HepG2 (cell line): ENCODE measurements at regions of chr6 and their contacts with region 1.

Region 1: DNA sequence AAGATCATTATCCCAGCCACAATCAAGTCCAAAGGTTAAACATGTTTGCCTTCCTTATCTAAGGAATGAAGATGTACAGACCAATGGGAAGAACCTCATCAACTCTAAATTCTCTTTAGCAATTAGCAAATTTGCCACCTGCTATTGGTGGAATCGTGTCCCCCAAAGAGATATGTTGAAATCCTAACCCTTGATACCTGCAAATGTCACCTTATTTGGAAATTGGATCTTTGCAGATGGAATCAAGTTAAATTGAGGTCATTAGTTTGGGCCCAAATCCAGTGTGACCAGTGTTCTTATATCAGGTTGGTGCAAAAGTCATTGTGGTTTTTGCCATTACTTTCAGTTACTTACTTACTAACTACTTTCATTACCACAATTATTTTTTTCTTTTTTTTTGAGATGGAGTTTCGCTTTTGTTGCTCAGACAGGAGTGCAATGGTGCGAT is 31.3 kb downstream of the KLHL31 start:
- DNase-seq: peak; percentile 85
- ATAC-seq: peak; percentile 82
- H3K4me3 ChIP-seq: peak overlapping the region in 2 of 3 experiments; percentile 4 to 6; a peak in 1 of 6 replicates
- H3K27ac ChIP-seq: peak overlapping the region; percentile 59
- H3K4me1 ChIP-seq: peaks cover 44% of the 10 kb centered on the region
- H3K27me3 ChIP-seq: no peaks in the 10 kb centered on the region
- CTCF ChIP-seq: no peak
- EP300 ChIP-seq: peak in 1 of 2 experiments; percentile 73; a peak in 1 of 4 replicates
- POLR2A ChIP-seq: no peak
- RAD21 ChIP-seq: no peak

Region 2: DNA sequence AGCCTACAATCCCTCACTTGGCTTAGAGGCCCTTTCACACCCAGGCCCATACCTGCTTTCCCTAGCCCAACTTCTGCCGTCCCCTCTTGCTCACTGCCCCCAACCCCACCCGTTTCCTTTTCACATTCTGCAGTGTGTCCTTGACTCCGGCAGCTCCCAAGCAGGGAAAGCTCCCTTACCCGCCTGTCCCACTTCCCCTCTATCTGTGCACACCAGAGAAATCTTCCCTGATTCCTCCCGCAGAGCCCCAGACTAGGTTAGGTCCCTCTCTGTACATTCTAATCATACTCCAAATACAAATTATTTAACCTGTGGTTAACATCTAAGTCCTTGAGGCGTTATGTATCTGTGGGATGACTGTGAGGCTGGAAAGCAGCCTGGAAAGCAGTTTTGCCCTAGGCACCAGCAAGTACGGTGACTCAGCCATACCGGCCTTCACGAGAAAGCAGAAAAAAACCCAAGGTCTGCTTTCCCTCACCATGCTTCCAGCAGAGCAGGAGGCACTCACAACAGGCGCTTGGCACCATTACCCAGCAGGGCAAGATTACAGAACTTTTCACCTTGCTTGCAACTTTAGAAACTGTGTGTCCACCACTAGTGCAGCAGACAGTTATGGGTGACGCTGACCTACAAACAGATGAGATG is 307.7 kb before region 1 on chr6:
- CTCF ChIA-PET with region 1: no interaction called
- POLR2A ChIA-PET with region 1: no interaction called
- in situ Hi-C with region 1: no loop called
- intact Hi-C with region 1: no loop called
- DNase-seq: no peak
- ATAC-seq: peak; percentile 27; the same call in 1 of the 3 replicates
- H3K4me3 ChIP-seq: no peak overlapping the region
- H3K27ac ChIP-seq: no peak overlapping the region
- H3K4me1 ChIP-seq: peaks cover 17% of the 10 kb centered on the region
- H3K27me3 ChIP-seq: no peaks in the 10 kb centered on the region
- CTCF ChIP-seq: no peak
- EP300 ChIP-seq: no peak
- POLR2A ChIP-seq: no peak
- RAD21 ChIP-seq: no peak

Region 3: GRCh38 chr6:53615633-53616449 is 18.4 kb before region 1 on chr6:
- CTCF ChIA-PET with region 1: no interaction called
- POLR2A ChIA-PET with region 1: interaction called, 10 read pairs
- in situ Hi-C with region 1: no loop called
- intact Hi-C with region 1: loop called (anchors 2 kb)
- DNase-seq: peak; percentile 100
- ATAC-seq: peak; percentile 95
- H3K4me3 ChIP-seq: peak overlapping the region; percentile 35 to 60 (median 44); a peak in 5 of 6 replicates
- H3K27ac ChIP-seq: peak overlapping the region; percentile 97
- H3K4me1 ChIP-seq: peaks cover 53% of the 10 kb centered on the region
- H3K27me3 ChIP-seq: no peaks in the 10 kb centered on the region
- CTCF ChIP-seq: no peak; the same call in 1 of the 2 replicates
- EP300 ChIP-seq: peak; percentile 96 to 97
- POLR2A ChIP-seq: peak; percentile 73 to 91
- RAD21 ChIP-seq: no peak; the same call in 1 of the 2 replicates

Region 4: GRCh38 chr6:53679446-53679933 is 45.3 kb after region 1 on chr6:
- CTCF ChIA-PET with region 1: no interaction called
- POLR2A ChIA-PET with region 1: no interaction called
- in situ Hi-C with region 1: no loop called
- intact Hi-C with region 1: no loop called
- DNase-seq: peak; percentile 62
- ATAC-seq: peak; percentile 89
- H3K4me3 ChIP-seq: no peak overlapping the region
- H3K27ac ChIP-seq: no peak overlapping the region
- H3K4me1 ChIP-seq: no peaks in the 10 kb centered on the region
- H3K27me3 ChIP-seq: 0 out of 5 replicates have a peak, but pooled peaks cover 0 to 4% of the 10 kb centered on the region in 2 experiments
- CTCF ChIP-seq: peak; percentile 47
- EP300 ChIP-seq: no peak
- POLR2A ChIP-seq: no peak
- RAD21 ChIP-seq: peak; percentile 54; the same call in 1 of the 2 replicates